Posterior vena cava (tissue), 2 donors: ENCODE measurements at regions of chr2 and their contacts with region 1.

Region 1: DNA sequence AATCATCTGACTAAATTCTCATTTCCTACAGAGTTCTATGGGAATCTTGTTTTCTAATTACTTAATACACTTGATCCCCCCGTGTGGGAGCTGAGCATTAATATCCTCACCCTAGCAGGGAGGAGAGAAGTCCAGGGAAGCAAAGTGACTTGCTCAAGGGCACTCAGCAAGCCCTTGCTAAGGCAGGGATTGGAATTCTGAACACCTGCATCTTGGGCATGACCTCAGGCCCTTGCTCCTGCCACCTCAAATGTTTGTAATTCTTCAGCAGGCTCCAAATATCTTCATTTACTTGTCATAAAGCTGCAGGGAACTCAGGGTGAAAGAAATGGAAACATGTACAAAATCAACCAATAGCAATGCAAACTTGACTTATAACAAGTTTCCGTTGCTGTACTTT is 162.4 kb downstream of the GPD2 start:
- DNase-seq: no peak

Region 2: GRCh38 chr2:156394033-156394739 is 204.4 kb before region 1 on chr2:
- intact Hi-C with region 1: loop called in 1 of 2 experiments (anchors 5 kb)
- DNase-seq: no peak